ENCODE measurements at regions of chr1 and their contacts with region 1.

Region 1: DNA sequence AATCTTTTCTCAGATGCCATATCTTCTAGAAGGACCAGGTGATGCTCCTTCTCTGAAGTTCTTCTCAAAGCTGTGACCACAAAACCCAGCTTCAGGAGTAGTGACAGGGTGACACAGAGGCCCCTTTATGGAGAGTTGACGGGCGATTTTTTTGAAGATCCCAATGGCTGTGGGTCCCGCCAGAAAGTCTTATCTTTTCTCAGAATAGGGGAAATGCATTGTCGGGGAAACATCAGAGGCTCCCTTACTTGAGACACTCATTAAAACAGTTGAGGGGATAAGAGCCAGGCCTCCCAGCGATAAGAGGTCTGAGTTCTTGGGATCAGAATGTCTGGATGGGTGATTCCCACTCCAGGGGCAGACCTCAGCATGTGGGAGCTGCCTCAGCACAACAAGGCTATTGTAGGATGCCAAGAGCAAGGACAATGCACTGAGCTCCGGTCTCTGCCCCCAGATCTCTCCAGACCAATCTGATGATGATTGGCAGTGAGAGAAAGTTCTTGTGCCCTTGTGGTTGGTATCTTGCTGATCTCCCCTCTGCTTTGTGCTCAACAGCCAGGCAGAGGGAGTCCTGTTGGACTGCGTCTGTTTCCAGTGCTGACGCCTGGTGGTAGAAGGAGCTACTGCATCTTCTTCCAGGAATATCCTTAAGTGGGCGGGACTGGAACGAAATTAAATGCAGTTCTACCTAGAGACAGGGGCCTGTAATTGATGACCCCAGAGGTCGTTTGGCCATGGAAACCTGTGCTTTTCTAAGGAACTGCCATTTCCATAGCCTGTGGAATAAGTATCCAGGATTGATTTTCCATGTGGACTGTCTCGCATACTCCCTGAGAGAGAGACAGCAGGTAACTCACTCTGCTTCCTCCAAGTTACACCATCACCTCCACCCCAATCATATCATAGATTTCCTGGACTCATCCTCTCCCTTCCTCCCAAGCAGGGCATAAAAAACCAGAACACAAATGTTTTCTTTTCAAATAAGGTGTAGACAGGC is 6.8 kb upstream of the ACKR1 start:
- DNase-seq: peak; percentile 84
- ATAC-seq: peak; percentile 89
- H3K4me3 Mint-ChIP-seq: no peak overlapping the region
- H3K27ac Mint-ChIP-seq: no peak overlapping the region
- H3K4me1 Mint-ChIP-seq: peaks cover 17% of the 10 kb centered on the region
- H3K27me3 Mint-ChIP-seq: no peaks in the 10 kb centered on the region
- CTCF ChIP-seq: peak; percentile 90

Region 2: DNA sequence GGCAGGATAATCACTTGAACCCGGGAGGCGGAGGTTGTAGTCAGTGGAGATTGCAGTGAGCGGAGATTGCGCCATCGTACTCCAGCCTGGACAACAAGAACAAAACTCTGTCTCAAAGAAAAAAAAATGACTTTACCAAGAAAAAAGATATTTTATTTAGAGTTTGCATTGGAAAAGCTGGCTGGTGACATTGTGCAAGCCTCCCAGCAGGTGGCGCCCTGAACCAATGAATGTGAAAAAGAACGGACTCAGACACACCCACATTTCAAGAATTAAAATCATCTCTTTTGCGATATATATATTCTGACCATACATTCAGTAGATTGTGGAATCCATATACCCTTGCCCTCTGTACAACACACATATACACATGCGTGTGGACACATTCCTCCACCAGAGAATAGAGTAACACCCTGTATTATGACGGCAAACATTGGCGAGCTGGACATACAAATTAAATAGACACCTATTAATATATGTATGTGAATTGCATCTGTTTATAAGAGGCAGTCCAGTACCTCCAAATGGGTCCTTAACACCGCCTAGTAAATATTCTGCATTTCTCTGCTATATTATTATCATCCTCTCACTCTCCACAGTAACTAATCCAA is 65.5 kb before region 1 on chr1:
- CTCF ChIA-PET with region 1: interaction called, 27 read pairs
- POLR2A ChIA-PET with region 1: no interaction called
- DNase-seq: peak; percentile 68
- ATAC-seq: peak; percentile 43; the same call in 1 of the 2 replicates
- H3K4me3 Mint-ChIP-seq: no peak overlapping the region
- H3K27ac Mint-ChIP-seq: no peak overlapping the region
- H3K4me1 Mint-ChIP-seq: no peaks in the 10 kb centered on the region
- H3K27me3 Mint-ChIP-seq: no peaks in the 10 kb centered on the region
- CTCF ChIP-seq: peak; percentile 67

Region 3: GRCh38 chr1:159141584-159142390 is 56.1 kb before region 1 on chr1:
- CTCF ChIA-PET with region 1: interaction called, 10 read pairs
- POLR2A ChIA-PET with region 1: no interaction called
- DNase-seq: peak; percentile 34
- ATAC-seq: peak; percentile 90
- H3K4me3 Mint-ChIP-seq: no peak overlapping the region
- H3K27ac Mint-ChIP-seq: no peak overlapping the region
- H3K4me1 Mint-ChIP-seq: peaks cover 5% of the 10 kb centered on the region
- H3K27me3 Mint-ChIP-seq: no peaks in the 10 kb centered on the region; the same call in 1 of the 2 replicates
- CTCF ChIP-seq: no peak

Region 4: DNA sequence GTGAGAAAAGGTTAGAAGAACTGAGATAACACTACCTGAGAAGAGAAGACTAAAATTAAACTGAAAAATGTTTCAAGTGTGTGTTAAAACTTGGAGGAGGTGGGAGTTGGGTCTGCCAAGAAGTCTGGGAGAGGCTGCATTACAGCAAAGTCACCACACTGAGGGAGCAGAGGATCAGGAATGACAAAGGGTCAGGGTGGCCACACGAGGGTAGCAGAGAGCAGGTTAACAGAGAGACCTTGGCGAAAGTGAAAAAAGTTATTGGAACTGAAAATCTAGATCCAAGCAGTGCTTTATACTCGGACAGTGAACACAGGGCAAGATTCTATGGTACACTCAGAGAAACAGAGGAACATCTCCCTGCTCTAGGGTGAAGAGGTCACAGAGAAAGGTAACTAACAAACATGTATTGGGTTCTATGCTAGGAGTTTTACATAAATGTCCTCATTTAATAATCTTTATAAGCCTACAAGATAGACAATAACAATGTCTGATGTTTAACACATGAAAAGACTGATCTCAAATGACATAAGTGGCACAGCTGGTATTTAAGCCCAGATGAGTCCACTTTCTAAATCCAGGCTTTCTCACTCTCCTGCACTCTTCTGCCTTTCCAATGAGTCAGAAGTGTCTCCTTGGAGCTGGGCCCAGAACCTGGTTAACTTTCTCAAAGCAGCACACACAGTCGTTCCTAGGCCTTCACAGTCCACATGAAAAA is 36.7 kb before region 1 on chr1:
- CTCF ChIA-PET with region 1: interaction called, 26 read pairs
- POLR2A ChIA-PET with region 1: no interaction called
- DNase-seq: peak; percentile 76
- ATAC-seq: peak; percentile 97
- H3K4me3 Mint-ChIP-seq: no peak overlapping the region
- H3K27ac Mint-ChIP-seq: no peak overlapping the region
- H3K4me1 Mint-ChIP-seq: peaks cover 11% of the 10 kb centered on the region
- H3K27me3 Mint-ChIP-seq: peaks cover 3% of the 10 kb centered on the region; the same call in 1 of the 2 replicates
- CTCF ChIP-seq: peak; percentile 87

Region 5: GRCh38 chr1:159171688-159172501 is 26.0 kb before region 1 on chr1:
- CTCF ChIA-PET with region 1: interaction called, 23 read pairs
- POLR2A ChIA-PET with region 1: no interaction called
- DNase-seq: peak; percentile 68
- ATAC-seq: peak; percentile 30
- H3K4me3 Mint-ChIP-seq: peak overlapping the region; percentile 89
- H3K27ac Mint-ChIP-seq: no peak overlapping the region
- H3K4me1 Mint-ChIP-seq: peaks cover 17% of the 10 kb centered on the region
- H3K27me3 Mint-ChIP-seq: peaks cover 23% of the 10 kb centered on the region
- CTCF ChIP-seq: no peak

Region 6: DNA sequence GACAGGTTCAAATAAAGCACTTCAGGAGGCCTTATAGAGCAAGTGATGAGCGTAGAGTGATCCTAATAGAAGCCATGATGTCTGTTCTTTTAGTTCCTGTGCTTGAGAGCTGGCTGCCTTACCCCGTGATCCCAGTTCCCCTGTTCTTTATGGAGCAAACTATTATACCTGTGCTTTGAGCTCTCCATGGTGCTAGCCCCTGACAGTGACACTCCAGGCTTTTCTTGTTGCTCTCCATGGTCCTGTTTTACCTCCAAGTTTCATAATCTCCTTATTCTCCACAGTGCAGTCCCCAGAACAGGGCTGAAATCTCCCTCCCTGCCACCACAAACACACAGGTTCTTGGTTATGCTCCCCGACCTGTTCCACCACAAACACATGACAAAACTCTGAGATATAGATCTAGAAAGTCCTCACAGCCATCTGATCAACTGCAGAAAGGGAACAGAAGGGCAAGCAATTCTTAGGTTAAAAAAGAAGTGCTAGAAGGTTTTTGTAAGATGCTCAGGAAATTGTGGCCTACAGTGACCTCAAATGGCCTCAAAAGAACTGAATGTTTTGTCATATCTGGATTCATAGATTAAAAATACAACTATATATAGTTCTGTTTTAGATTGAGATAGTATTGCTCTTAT is 20.5 kb before region 1 on chr1:
- CTCF ChIA-PET with region 1: interaction called, 23 read pairs
- POLR2A ChIA-PET with region 1: no interaction called
- DNase-seq: peak; percentile 73
- ATAC-seq: peak; percentile 58
- H3K4me3 Mint-ChIP-seq: no peak overlapping the region
- H3K27ac Mint-ChIP-seq: no peak overlapping the region
- H3K4me1 Mint-ChIP-seq: peaks cover 20% of the 10 kb centered on the region
- H3K27me3 Mint-ChIP-seq: peaks cover 5% of the 10 kb centered on the region
- CTCF ChIP-seq: no peak

Measured in WTC11 (cell line).